Spleen (tissue), 13 donors: ENCODE measurements at regions of chr9 and their contacts with region 1.

Region 1: GRCh38 chr9:34899535-34900158 is 58.4 kb upstream of the PHF24 start:
- DNase-seq: peak; percentile 90
- H3K4me3 ChIP-seq: no peak overlapping the region
- H3K27ac ChIP-seq: no peak overlapping the region
- H3K4me1 ChIP-seq: no peaks in the 10 kb centered on the region
- H3K27me3 ChIP-seq: peaks cover 0 to 41% (median 4%) of the 10 kb centered on the region in 7 donors
- CTCF ChIP-seq: peak; percentile 75 to 93 (median 89)
- POLR2A ChIP-seq: no peak

Region 2: DNA sequence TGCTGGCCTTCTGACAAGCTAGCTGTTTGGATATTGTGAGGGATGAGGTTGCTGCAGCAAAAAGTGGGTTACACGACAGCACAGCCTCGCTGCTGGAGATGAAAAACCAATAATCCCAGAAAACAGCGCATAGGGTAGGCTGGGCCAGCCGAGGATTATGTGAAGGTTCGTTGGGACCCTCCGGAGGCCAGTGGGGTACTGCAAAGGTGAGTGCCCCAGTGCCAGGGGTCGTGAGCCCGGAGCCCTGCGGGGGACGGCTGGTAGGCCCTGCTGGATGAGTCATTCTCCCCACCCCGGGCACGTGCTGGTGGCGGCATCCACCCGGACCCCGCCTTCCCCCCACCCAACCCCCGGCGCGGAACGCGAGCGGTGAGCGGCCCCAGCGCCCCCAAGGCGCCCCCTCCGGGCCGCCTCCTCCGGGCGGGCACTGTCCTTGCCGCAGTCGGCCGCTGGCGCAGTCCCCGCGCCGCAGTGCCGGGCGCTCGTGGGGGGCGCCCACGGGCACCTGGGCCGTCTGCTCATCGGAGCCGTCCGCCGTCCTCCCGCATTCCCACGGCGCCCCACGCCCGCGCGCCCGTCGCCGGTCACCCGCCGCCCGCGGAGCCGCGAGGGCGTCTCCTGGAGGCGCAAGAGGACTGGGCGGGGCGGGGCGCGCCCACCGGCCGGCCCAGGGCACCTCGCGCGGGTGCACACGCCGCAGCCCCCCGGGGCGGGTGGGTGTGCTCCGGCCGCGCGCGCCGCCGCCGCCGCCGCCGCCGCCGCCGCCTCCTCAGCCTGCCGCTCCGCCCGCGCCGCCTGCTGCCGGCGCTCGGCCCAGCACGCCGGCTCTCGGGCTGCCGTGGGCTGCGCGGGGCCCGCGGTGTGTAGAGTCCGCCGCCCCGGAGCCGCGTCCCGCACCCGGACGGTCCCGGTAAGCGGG is 58.1 kb after region 1 on chr9 and contains the start of gene PHF24:
- intact Hi-C with region 1: no loop called
- DNase-seq: peak; percentile 81
- H3K4me3 ChIP-seq: peak within 1 kb of the TSS in 6 of 8 donors; percentile 17 to 73 (median 46)
- H3K27ac ChIP-seq: no peak within 1 kb of the TSS
- H3K4me1 ChIP-seq: peaks cover 0 to 15% (median 7%) of the 10 kb centered on the region in 6 donors
- H3K27me3 ChIP-seq: peaks cover 0 to 87% (median 40%) of the 10 kb centered on the region in 7 donors
- CTCF ChIP-seq: no peak
- POLR2A ChIP-seq: no peak
- total RNA-seq, gene PHF24: 0.17 to 2.4 (median 0.67) TPM

Region 3: GRCh38 chr9:34989003-34989945 is 89.6 kb after region 1 on chr9 and contains the start of gene DNAJB5:
- intact Hi-C with region 1: loop called (anchors 10 kb)
- DNase-seq: peak; percentile 97
- H3K4me3 ChIP-seq: peak within 1 kb of the TSS; percentile 68 to 92 (median 78)
- H3K27ac ChIP-seq: peak within 1 kb of the TSS; percentile 51 to 90 (median 86)
- H3K4me1 ChIP-seq: peaks cover 15 to 92% (median 56%) of the 10 kb centered on the region in 6 donors
- H3K27me3 ChIP-seq: peaks cover 0 to 8% (median 0%) of the 10 kb centered on the region in 7 donors
- CTCF ChIP-seq: peak in 3 of 11 experiments; percentile 14 to 36 (median 31)
- POLR2A ChIP-seq: peak in 1 of 3 donors; percentile 42
- total RNA-seq, gene DNAJB5: 5.6 to 14.4 (median 12.8) TPM

Region 4: GRCh38 chr9:35096035-35096849 is 196.6 kb after region 1 on chr9 and contains the start of gene PIGO:
- intact Hi-C with region 1: loop called (anchors 10 kb)
- DNase-seq: peak; percentile 99
- H3K4me3 ChIP-seq: peak within 1 kb of the TSS; percentile 60 to 91 (median 74)
- H3K27ac ChIP-seq: peak within 1 kb of the TSS; percentile 97 to 99 (median 98)
- H3K4me1 ChIP-seq: peaks cover 8 to 35% (median 17%) of the 10 kb centered on the region in 6 donors
- H3K27me3 ChIP-seq: no peaks in the 10 kb centered on the region
- CTCF ChIP-seq: peak; percentile 76 to 92 (median 83)
- POLR2A ChIP-seq: peak in 1 of 3 donors; percentile 58
- total RNA-seq, gene PIGO: 17.5 to 25.0 (median 21.0) TPM

Region 5: DNA sequence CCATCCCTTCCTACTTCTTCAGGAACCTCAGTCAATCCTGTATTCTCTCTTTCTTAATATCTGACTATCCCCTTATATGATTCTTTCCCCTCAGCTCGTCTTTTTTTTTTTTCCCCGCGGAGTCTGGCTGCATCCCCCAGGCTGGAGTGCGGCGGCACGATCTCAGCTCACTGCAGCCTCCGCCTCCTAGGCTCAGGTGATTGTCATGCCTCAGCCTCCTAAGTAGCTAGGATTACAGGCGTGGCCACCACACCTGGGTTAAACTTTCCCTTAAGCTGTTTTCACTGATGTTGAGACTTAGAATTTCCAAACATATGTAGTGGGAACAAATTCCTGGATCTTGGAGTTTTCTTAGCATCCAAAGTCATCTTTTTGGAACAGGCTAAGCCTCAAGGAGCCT is 576.9 kb after region 1 on chr9:
- intact Hi-C with region 1: loop called (anchors 5 kb)
- DNase-seq: no peak
- H3K4me3 ChIP-seq: no peak overlapping the region
- H3K27ac ChIP-seq: no peak overlapping the region
- H3K4me1 ChIP-seq: peaks cover 0 to 4% (median 0%) of the 10 kb centered on the region in 6 donors
- H3K27me3 ChIP-seq: peaks cover 0 to 12% (median 0%) of the 10 kb centered on the region in 7 donors
- CTCF ChIP-seq: no peak
- POLR2A ChIP-seq: no peak